Mammary epithelial cell (primary cell): ENCODE measurements at regions of chr11 and their contacts with region 1.

Region 1: GRCh38 chr11:86151174-86152005 is 82.5 kb upstream of the PICALM start:
- DNase-seq: no peak
- H3K4me3 ChIP-seq: peak overlapping the region in 1 of 3 experiments; percentile 13
- H3K27ac ChIP-seq: peak overlapping the region; percentile 90
- H3K4me1 ChIP-seq: peaks cover 54% of the 10 kb centered on the region
- H3K27me3 ChIP-seq: no peaks in the 10 kb centered on the region
- CTCF ChIP-seq: no peak

Region 2: DNA sequence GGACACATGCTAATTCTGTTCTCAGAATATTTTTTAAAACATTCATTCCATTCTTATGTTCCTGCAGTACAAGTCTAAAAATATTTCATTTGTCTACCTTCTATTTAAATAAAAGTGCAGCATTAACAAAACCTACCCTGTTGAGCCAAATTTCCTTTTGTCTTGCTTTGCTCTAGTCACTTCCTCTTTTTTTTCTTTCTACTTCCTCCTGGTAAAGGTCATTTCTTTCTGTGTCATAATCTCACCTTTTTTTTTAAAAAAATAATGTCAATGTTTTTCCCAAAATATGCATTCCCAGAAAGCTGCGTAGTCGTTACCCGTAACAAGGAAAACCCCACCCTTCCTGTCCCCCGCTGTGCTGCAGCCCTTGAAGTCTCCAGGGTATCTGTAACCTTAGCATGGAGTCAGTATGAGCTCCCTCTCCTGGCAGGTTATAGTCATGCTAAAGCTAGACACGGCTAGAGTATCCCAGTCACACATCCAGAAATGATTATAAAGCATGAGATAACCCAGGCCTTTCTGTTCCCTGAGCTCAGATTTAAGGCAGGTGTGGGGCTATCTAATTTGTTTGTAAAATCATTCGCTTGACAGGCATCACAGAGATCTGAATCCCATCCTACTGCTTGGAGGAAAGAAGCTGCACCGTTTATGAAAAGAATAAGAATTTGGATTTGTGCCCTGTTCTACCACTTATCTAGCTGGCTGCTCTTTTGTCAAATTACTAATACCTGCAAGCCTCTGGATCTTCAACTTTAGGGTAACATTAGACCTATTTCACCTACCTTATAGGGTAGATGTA is 42.1 kb after region 1 on chr11:
- CTCF ChIA-PET with region 1: interaction called, 9 read pairs
- dilution Hi-C with region 1: no loop called
- in situ Hi-C with region 1: no loop called
- intact Hi-C with region 1: loop called (anchors 1 kb)
- DNase-seq: peak; percentile 69
- H3K4me3 ChIP-seq: peak overlapping the region in 2 of 3 experiments; percentile 14 to 18
- H3K27ac ChIP-seq: peak overlapping the region; percentile 5
- H3K4me1 ChIP-seq: peaks cover 7% of the 10 kb centered on the region
- H3K27me3 ChIP-seq: no peaks in the 10 kb centered on the region
- CTCF ChIP-seq: peak; percentile 82 to 89

Region 3: DNA sequence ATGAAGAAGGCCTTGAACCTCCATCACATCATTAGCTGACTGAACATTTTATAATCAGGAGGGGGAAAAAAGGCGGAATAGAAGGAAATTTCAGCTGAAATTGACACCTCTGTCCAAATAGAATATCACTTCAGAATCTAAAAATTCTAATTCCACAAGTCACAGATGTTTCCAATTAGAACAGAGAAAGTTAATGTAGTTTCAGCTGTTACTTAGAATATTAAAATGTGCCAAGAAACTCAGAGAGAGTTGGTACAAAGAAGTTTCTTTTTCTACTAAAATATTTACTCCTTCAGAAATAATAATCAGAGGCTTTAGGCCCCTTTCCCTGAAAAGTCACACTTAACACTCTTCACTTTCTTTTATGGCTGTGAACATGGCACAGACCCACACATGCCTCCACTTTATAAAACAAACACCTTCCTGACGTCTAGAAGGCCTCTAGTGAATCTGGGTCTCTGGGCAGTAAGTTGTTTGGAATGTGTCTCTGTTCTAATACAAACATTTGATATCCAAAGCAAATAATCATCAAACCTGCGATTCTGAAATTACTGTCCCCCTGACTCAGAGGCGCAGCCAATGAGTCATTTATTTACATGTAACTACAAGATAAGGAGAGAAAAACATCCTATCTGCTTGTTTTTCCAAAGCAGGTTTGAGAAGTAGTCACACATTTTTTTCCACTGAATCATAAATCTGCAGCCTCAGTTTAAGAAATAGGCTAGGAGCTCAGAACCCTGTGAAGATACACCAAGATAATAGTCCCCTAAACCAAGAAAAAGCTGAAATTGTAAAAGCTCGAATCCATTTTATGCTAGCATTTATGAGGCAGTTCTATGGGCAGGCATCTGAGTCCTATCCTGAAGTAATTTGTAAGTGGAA is 372.6 kb after region 1 on chr11:
- CTCF ChIA-PET with region 1: no interaction called
- dilution Hi-C with region 1: no loop called
- in situ Hi-C with region 1: no loop called
- intact Hi-C with region 1: no loop called
- DNase-seq: peak; percentile 87
- H3K4me3 ChIP-seq: no peak overlapping the region
- H3K27ac ChIP-seq: peak overlapping the region; percentile 77
- H3K4me1 ChIP-seq: peaks cover 22% of the 10 kb centered on the region
- H3K27me3 ChIP-seq: no peaks in the 10 kb centered on the region
- CTCF ChIP-seq: no peak